Right ventricle myocardium superior (tissue), 1 donor: ENCODE measurements at regions of chr6 and their contacts with region 1.

Region 1: GRCh38 chr6:118965371-118965770 is 30.4 kb upstream of the MCM9 start:
- DNase-seq: no peak
- ATAC-seq: no peak

Region 2: GRCh38 chr6:118719351-118720124 is 245.8 kb before region 1 on chr6:
- intact Hi-C with region 1: no loop called
- DNase-seq: no peak
- ATAC-seq: no peak

Region 3: DNA sequence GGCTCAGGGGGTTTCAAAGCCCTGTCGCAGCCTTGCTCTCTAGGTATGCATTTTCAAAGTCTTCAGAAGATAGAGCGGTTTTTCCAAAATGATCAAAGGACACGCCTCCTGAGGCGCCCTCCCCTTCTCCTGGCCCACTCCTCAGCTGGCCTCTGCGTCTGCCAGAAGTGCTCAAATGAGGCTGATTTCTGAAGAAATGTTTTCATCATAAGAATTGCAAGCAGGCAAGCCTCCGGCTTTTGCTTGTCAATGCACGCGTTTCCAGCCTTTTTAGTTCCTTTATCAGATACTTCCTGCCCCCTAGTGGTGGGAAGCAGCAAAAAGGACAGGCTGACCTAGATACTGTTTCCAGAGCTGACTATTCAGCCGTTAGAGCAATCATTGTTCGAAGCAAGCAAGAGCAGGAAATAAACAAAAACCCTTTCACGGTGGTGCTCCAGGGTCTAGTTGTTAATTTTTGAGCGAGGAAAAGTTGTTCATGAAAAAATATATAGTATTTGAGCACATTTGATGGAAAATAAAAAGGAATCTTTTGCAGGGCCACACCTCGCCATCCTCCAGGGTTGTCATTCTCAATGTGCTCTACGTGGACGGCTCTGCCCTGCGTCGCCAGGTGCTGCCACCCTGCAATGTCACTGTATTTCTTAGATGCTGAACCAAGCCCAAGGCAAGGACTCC is 164.8 kb before region 1 on chr6:
- intact Hi-C with region 1: no loop called
- DNase-seq: peak; percentile 70
- ATAC-seq: peak; percentile 92

Region 4: GRCh38 chr6:119113961-119114360 is 148.6 kb after region 1 on chr6:
- intact Hi-C with region 1: loop called (anchors 2 kb)
- DNase-seq: no peak
- ATAC-seq: no peak

Region 5: GRCh38 chr6:119284861-119285521 is 319.6 kb after region 1 on chr6:
- intact Hi-C with region 1: no loop called
- DNase-seq: no peak
- ATAC-seq: no peak